Activated T-helper 1 cell treated with anti-CD3 and anti-CD28 coated beads, Interleukin-12 subunit alpha, Interleukin-12 subunit beta, Interleukin-2, Interleukin-4 antibody, amounts not matched to agents 30 ng/mL and 10 ng/mL and 1 ng/mL, durations not matched to agents 14 hours and 24 hours and 36 hours (primary cell): ENCODE measurements at regions of chr16 and their contacts with region 1.

Region 1: GRCh38 chr16:56203052-56203451 is 11.8 kb downstream of the GNAO1 start:
- DNase-seq: peak; percentile 37
- H3K4me3 Mint-ChIP-seq: no peak overlapping the region
- H3K27ac Mint-ChIP-seq: no peak overlapping the region
- H3K4me1 Mint-ChIP-seq: no peaks in the 10 kb centered on the region
- H3K27me3 Mint-ChIP-seq: peaks cover 2% of the 10 kb centered on the region

Region 2: GRCh38 chr16:55912022-55912421 is 291.0 kb before region 1 on chr16:
- intact Hi-C with region 1: no loop called
- DNase-seq: no peak
- H3K4me3 Mint-ChIP-seq: no peak overlapping the region
- H3K27ac Mint-ChIP-seq: no peak overlapping the region
- H3K4me1 Mint-ChIP-seq: no peaks in the 10 kb centered on the region
- H3K27me3 Mint-ChIP-seq: no peaks in the 10 kb centered on the region

Region 3: GRCh38 chr16:55955845-55956244 is 247.2 kb before region 1 on chr16:
- intact Hi-C with region 1: no loop called
- DNase-seq: no peak
- H3K4me3 Mint-ChIP-seq: no peak overlapping the region
- H3K27ac Mint-ChIP-seq: no peak overlapping the region
- H3K4me1 Mint-ChIP-seq: no peaks in the 10 kb centered on the region
- H3K27me3 Mint-ChIP-seq: peaks cover 8% of the 10 kb centered on the region

Region 4: GRCh38 chr16:56013962-56014552 is 189.0 kb before region 1 on chr16:
- intact Hi-C with region 1: no loop called
- DNase-seq: peak; percentile 7
- H3K4me3 Mint-ChIP-seq: no peak overlapping the region
- H3K27ac Mint-ChIP-seq: no peak overlapping the region
- H3K4me1 Mint-ChIP-seq: no peaks in the 10 kb centered on the region
- H3K27me3 Mint-ChIP-seq: peaks cover 3% of the 10 kb centered on the region

Region 5: DNA sequence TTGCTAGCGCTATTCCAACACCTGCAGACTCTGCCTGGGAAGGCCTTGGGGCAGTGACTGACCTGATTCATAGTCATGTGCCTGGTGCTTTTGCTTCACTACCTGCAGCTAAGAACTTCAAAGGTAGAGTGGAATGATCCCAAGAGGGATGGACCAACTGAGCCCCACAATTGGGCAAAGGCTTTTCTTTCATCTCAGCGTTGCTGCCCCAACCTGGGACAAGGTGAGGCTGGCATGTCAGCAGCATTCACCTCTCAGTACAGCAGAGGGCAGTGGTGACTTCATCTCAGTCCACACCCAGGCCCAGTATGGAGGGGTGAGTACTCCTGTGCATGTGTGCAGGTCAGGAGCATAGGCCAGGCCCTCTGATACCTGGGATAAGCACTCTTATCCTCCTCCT is 161.4 kb before region 1 on chr16:
- intact Hi-C with region 1: loop called (anchors 2 kb)
- DNase-seq: peak; percentile 2
- H3K4me3 Mint-ChIP-seq: no peak overlapping the region
- H3K27ac Mint-ChIP-seq: no peak overlapping the region
- H3K4me1 Mint-ChIP-seq: no peaks in the 10 kb centered on the region
- H3K27me3 Mint-ChIP-seq: peaks cover 5% of the 10 kb centered on the region

Region 6: GRCh38 chr16:56277040-56277439 is 74.0 kb after region 1 on chr16:
- intact Hi-C with region 1: loop called (anchors 5 kb)
- DNase-seq: no peak
- H3K4me3 Mint-ChIP-seq: no peak overlapping the region
- H3K27ac Mint-ChIP-seq: no peak overlapping the region
- H3K4me1 Mint-ChIP-seq: peaks cover 22% of the 10 kb centered on the region
- H3K27me3 Mint-ChIP-seq: peaks cover 26% of the 10 kb centered on the region

Region 7: DNA sequence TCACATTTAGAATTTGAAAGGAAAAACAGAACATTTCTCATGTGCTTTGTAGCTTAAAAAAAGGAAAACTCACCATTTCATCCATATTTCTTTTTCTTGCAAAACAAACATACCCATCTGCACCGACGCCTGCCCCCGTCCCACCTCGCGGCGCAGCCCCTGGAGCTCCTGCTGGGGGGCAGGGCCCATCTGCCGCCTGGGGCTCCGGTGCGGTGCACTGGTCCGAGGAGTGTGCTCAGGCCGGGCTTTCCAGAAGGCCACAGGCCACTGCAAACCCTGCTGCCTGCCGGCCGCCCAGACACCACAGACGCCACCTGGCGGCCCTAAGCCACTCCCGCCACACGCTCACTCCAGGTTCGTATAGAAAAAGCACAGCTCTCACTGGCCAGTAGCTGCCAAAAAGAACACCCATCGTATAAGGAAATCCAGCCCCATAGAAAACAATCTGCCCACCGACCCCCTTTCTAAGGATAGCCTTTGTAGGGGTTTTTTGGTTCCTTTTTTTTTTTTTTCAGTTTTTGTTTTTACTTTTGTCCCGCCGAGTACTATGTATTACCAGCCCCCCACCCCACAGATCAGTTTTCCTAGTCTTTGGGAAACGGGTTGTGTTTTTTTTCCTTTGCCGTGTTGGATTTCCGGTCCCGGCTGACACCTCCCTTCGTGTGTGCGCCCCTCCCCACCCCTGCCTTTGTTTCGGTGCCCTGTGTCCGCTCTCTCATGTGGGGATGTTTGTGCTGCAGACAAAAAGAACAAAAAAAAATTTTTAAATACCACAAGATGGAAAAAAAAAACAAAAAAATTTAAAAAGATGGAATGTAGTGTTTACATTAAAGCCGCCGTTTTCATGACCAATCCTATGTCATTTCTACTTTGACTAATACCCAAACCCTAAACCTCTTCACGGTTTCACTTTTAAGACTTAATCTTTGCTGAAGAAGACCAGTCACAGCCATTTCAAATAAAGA is 153.5 kb after region 1 on chr16:
- intact Hi-C with region 1: loop called (anchors 1 kb)
- DNase-seq: peak; percentile 46
- H3K4me3 Mint-ChIP-seq: peak overlapping the region; percentile 71
- H3K27ac Mint-ChIP-seq: peak overlapping the region; percentile 88
- H3K4me1 Mint-ChIP-seq: peaks cover 38% of the 10 kb centered on the region
- H3K27me3 Mint-ChIP-seq: peaks cover 2% of the 10 kb centered on the region

Region 8: GRCh38 chr16:56558024-56558747 is 355.1 kb after region 1 on chr16:
- intact Hi-C with region 1: no loop called
- DNase-seq: no peak
- H3K4me3 Mint-ChIP-seq: no peak overlapping the region
- H3K27ac Mint-ChIP-seq: no peak overlapping the region
- H3K4me1 Mint-ChIP-seq: no peaks in the 10 kb centered on the region
- H3K27me3 Mint-ChIP-seq: peaks cover 30% of the 10 kb centered on the region

Region 9: DNA sequence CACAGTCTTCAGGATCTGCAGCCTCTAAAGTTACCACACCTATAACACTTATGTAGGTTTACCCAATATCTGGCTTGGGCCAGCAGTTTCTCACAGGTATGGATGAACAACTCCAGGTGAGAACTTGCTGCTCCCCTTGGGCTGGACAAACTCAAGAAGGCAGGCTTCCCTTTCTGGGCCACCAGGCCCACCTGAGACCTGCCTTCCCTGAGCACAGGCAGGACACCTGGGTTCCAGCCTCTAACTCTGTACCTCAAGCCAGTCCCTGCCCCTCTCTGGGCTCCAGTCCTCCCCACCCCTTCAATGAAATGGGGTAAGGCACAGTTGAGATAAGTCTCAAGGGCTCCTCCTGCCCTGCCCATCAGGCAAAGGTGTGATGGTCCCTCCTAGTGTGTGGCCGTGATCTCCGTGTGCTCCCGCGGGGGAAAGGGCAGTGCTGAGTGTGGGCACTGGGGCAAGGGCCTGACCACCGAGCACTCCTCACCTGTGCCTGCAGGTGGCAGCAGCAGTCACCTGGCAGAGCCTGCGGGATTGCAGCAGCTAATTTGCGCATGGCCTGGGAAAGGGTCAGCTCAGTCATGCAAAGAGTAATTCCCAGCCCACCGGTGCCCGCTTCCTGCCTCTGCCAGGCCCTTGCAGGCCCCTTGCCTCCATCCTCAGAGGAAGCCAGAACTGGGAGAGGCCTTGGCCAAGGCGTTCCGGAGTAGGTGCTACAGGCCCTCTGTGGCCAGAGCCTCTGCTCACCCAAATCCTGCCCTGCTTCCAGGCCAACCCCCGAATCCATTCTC is 1397.2 kb after region 1 on chr16:
- intact Hi-C with region 1: loop called (anchors 5 kb)
- DNase-seq: no peak
- H3K4me3 Mint-ChIP-seq: no peak overlapping the region
- H3K27ac Mint-ChIP-seq: peak overlapping the region; percentile 24
- H3K4me1 Mint-ChIP-seq: peaks cover 62% of the 10 kb centered on the region
- H3K27me3 Mint-ChIP-seq: no peaks in the 10 kb centered on the region